ENCODE measurements at regions of chr1 and their contacts with region 1.

Region 1: GRCh38 chr1:67149179-67149770 is 14.5 kb upstream of the C1orf141 start:
- DNase-seq: peak; percentile 51 to 52
- H3K4me3 ChIP-seq: no peak overlapping the region
- H3K27ac ChIP-seq: no peak overlapping the region
- H3K4me1 ChIP-seq: no peaks in the 10 kb centered on the region
- H3K27me3 ChIP-seq: no peaks in the 10 kb centered on the region
- CTCF ChIP-seq: peak; percentile 65 to 76 (median 70)
- POLR2A ChIP-seq: no peak

Region 2: DNA sequence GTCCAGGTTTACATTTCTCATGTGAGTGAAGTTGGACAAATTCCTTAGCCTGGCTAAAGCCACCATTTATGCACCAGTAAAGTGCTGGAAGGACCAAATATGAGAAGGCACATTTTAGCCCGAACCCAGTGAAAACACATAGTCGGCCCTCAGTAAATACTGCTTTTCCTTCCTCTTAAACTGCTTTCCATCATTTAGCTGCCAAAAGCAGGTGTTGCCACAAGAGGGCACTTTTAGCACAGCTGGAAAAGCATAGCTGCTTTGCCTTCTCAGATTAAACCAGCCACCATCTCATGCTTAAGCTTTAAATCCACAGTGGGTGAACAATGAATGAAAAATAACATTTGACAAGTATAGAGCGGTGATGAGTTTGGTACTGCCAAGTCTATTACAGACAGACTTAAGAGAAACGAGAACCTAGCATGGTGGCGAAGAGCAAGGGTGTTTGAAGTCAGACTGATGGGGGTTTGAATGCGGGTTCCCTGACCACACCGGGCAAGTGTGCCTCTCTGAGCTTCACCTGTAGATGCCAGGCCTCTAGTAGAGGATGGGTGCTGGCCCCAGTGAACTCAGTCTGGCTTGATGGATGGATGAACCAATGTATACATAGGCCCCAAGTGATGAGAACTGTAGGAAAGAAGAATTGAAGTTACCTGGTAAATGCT is 153.1 kb before region 1 on chr1:
- intact Hi-C with region 1: loop called (anchors 5 kb)
- DNase-seq: peak; percentile 45 to 49
- H3K4me3 ChIP-seq: no peak overlapping the region
- H3K27ac ChIP-seq: no peak overlapping the region
- H3K4me1 ChIP-seq: no peaks in the 10 kb centered on the region
- H3K27me3 ChIP-seq: no peaks in the 10 kb centered on the region
- CTCF ChIP-seq: peak; percentile 49 to 65 (median 62)
- POLR2A ChIP-seq: no peak

Region 3: GRCh38 chr1:67261680-67262079 is 112.4 kb after region 1 on chr1:
- intact Hi-C with region 1: no loop called
- DNase-seq: no peak
- H3K4me3 ChIP-seq: no peak overlapping the region
- H3K27ac ChIP-seq: no peak overlapping the region
- H3K4me1 ChIP-seq: no peaks in the 10 kb centered on the region
- H3K27me3 ChIP-seq: no peaks in the 10 kb centered on the region
- CTCF ChIP-seq: no peak
- POLR2A ChIP-seq: no peak

Region 4: GRCh38 chr1:67515324-67516080 is 366.2 kb after region 1 on chr1:
- intact Hi-C with region 1: no loop called
- DNase-seq: no peak
- H3K4me3 ChIP-seq: no peak overlapping the region
- H3K27ac ChIP-seq: no peak overlapping the region
- H3K4me1 ChIP-seq: no peaks in the 10 kb centered on the region
- H3K27me3 ChIP-seq: no peaks in the 10 kb centered on the region
- CTCF ChIP-seq: no peak
- POLR2A ChIP-seq: no peak

Measured in uterus (tissue), 4 donors.